PC-3 (cell line): ENCODE measurements at regions of chr5 and their contacts with region 1.

Region 1: GRCh38 chr5:124748687-124749594 is 2.5 kb upstream of the ZNF608 start:
- DNase-seq: peak; percentile 88
- ATAC-seq: peak; percentile 86
- H3K4me3 ChIP-seq: peak overlapping the region; percentile 89
- H3K27ac ChIP-seq: peak overlapping the region; percentile 58
- H3K4me1 ChIP-seq: peaks cover 26% of the 10 kb centered on the region
- H3K27me3 ChIP-seq: no peaks in the 10 kb centered on the region
- CTCF ChIP-seq: no peak

Region 2: GRCh38 chr5:123671042-123671441 is 1077.9 kb before region 1 on chr5:
- CTCF ChIA-PET with region 1: no interaction called
- POLR2A ChIA-PET with region 1: no interaction called
- intact Hi-C with region 1: loop called (anchors 5 kb)
- DNase-seq: peak; percentile 66
- ATAC-seq: no peak
- H3K4me3 ChIP-seq: no peak overlapping the region
- H3K27ac ChIP-seq: no peak overlapping the region
- H3K4me1 ChIP-seq: no peaks in the 10 kb centered on the region
- H3K27me3 ChIP-seq: no peaks in the 10 kb centered on the region
- CTCF ChIP-seq: peak; percentile 74

Region 3: GRCh38 chr5:124599028-124599973 is 149.6 kb before region 1 on chr5:
- CTCF ChIA-PET with region 1: no interaction called
- POLR2A ChIA-PET with region 1: interaction called, 14 read pairs
- intact Hi-C with region 1: loop called (anchors 2 kb)
- DNase-seq: peak; percentile 48
- ATAC-seq: peak; percentile 75
- H3K4me3 ChIP-seq: no peak overlapping the region
- H3K27ac ChIP-seq: peak overlapping the region; percentile 54
- H3K4me1 ChIP-seq: peaks cover 30% of the 10 kb centered on the region
- H3K27me3 ChIP-seq: no peaks in the 10 kb centered on the region
- CTCF ChIP-seq: no peak

Region 4: GRCh38 chr5:124790895-124791732 is 42.2 kb after region 1 on chr5:
- CTCF ChIA-PET with region 1: no interaction called
- POLR2A ChIA-PET with region 1: no interaction called
- intact Hi-C with region 1: loop called (anchors 1 kb)
- DNase-seq: peak; percentile 12
- ATAC-seq: no peak
- H3K4me3 ChIP-seq: no peak overlapping the region
- H3K27ac ChIP-seq: no peak overlapping the region
- H3K4me1 ChIP-seq: peaks cover 15% of the 10 kb centered on the region
- H3K27me3 ChIP-seq: no peaks in the 10 kb centered on the region
- CTCF ChIP-seq: no peak

Region 5: DNA sequence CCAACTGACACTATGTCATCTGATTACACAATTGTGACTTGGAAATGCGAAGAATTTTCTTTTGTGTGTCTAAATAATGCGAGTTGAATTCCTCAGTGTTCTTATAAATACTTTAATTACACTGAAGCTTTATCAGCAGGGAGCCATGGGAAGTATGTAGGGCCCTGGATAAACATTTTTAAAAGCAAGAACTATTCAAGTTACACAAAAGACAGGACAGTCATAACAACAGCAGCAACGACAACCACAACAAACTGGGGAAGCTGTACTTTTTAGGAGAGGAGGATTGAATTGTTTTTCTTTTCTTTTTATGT is 247.8 kb after region 1 on chr5:
- CTCF ChIA-PET with region 1: no interaction called
- POLR2A ChIA-PET with region 1: interaction called, 11 read pairs
- intact Hi-C with region 1: loop called (anchors 1 kb)
- DNase-seq: peak; percentile 4
- ATAC-seq: no peak
- H3K4me3 ChIP-seq: no peak overlapping the region
- H3K27ac ChIP-seq: no peak overlapping the region
- H3K4me1 ChIP-seq: peaks cover 18% of the 10 kb centered on the region
- H3K27me3 ChIP-seq: no peaks in the 10 kb centered on the region
- CTCF ChIP-seq: no peak

Region 6: GRCh38 chr5:125085797-125086505 is 337.0 kb after region 1 on chr5:
- CTCF ChIA-PET with region 1: interaction called, 13 read pairs
- POLR2A ChIA-PET with region 1: no interaction called
- intact Hi-C with region 1: no loop called
- DNase-seq: no peak
- ATAC-seq: no peak
- H3K4me3 ChIP-seq: no peak overlapping the region
- H3K27ac ChIP-seq: no peak overlapping the region
- H3K4me1 ChIP-seq: no peaks in the 10 kb centered on the region
- H3K27me3 ChIP-seq: no peaks in the 10 kb centered on the region
- CTCF ChIP-seq: no peak

Region 7: DNA sequence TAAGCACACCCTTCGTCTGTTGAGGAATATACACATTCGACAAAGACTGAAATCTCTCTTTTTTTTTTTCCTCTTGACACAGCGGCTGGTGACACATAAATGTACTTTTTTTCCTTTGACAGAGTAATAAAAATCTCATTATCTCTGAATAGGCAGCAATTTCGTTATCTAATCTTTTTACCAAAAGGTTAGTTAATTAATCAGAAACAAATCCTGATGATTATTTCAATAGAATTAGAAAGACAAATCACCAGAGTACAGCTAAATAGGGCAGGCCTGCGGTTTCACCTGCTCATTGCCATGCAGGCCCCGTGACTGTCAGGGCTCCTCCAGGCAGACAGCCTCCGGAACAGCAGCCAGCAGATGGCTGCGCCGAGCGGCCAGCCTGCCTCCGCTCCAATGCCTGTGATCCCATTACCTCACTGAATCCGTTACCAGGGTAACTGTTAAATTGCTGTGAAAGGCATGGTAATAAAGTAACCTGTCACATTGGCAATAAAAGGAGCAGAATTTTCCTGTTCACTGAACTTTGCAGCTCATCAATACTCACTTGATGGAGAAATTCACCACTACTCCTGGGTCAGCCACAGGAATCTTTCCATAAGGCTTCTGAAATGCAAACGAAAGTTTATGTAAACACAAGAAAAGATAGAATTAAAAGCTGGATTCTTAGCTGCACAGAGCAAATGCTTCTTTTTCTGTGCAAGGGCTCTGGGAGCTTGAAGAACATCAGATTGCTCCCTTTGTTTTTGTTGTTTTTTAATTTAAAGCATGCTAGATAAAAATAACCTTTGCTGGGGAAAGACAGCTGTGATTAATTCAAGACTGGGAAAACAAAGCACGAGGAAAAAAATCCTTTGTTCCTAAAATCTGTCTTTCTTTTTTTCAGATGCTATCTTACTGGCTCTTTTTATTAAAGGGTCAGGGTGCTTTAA is 663.9 kb after region 1 on chr5:
- CTCF ChIA-PET with region 1: interaction called, 5 read pairs
- POLR2A ChIA-PET with region 1: interaction called, 4 read pairs
- intact Hi-C with region 1: loop called (anchors 1 kb)
- DNase-seq: peak; percentile 56
- ATAC-seq: peak; percentile 51
- H3K4me3 ChIP-seq: peak overlapping the region; percentile 30; the same call in 1 of the 2 replicates
- H3K27ac ChIP-seq: 0 out of 2 replicates have a peak overlapping the region, but pooled peaks have one; percentile 5
- H3K4me1 ChIP-seq: peaks cover 53% of the 10 kb centered on the region
- H3K27me3 ChIP-seq: no peaks in the 10 kb centered on the region
- CTCF ChIP-seq: peak; percentile 50